A673 (cell line): ENCODE measurements at regions of chr3 and their contacts with region 1.

Region 1: DNA sequence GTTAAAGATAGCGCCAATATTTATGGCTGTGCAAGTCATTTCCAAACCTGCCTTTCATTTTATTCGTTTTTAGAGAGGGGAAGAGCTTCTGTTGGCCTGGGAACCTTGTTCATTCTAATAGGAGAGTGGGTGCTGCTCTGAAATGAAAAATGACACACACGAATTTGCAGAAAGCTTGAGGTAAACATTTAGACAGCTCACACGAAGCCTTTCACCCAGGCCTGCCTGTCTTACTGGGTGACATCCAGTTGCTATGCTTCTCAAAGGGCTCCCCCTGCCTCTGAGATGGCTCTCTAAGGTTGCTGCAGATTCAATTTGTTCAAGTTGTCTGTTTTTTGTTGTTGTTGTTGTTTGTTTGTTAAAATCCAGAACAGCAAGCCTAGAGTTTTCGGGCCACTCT is 18.2 kb downstream of the PEX5L start:
- DNase-seq: no peak
- H3K4me3 ChIP-seq: no peak overlapping the region
- H3K27ac ChIP-seq: no peak overlapping the region
- H3K4me1 ChIP-seq: no peaks in the 10 kb centered on the region
- H3K27me3 ChIP-seq: peaks cover 18% of the 10 kb centered on the region
- CTCF ChIP-seq: no peak

Region 2: GRCh38 chr3:178415384-178415783 is 1603.2 kb before region 1 on chr3:
- CTCF ChIA-PET with region 1: no interaction called
- POLR2A ChIA-PET with region 1: no interaction called
- intact Hi-C with region 1: no loop called
- DNase-seq: no peak
- H3K4me3 ChIP-seq: no peak overlapping the region
- H3K27ac ChIP-seq: no peak overlapping the region
- H3K4me1 ChIP-seq: no peaks in the 10 kb centered on the region
- H3K27me3 ChIP-seq: no peaks in the 10 kb centered on the region
- CTCF ChIP-seq: no peak

Region 3: DNA sequence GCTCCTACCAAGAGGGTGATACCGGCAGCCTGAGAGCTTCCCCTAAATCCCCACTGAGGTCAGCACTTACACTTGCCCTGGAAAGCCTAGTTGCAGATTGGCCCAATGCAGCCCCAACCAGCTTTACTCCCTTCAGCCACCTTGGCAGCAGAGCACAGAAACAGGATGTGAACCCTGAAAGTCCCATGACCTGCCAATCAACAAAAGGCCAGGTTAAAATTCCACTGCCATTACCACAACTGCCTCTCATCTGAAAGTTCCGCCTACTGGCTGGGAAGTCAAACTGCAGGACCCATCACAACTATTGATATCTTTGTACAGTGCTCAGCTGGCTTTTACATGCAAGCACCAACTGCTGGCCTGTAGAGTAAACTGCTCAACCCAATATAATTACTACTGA is 1103.2 kb before region 1 on chr3:
- CTCF ChIA-PET with region 1: no interaction called
- POLR2A ChIA-PET with region 1: no interaction called
- intact Hi-C with region 1: loop called (anchors 5 kb)
- DNase-seq: no peak
- H3K4me3 ChIP-seq: no peak overlapping the region
- H3K27ac ChIP-seq: no peak overlapping the region
- H3K4me1 ChIP-seq: no peaks in the 10 kb centered on the region
- H3K27me3 ChIP-seq: no peaks in the 10 kb centered on the region
- CTCF ChIP-seq: no peak

Region 4: DNA sequence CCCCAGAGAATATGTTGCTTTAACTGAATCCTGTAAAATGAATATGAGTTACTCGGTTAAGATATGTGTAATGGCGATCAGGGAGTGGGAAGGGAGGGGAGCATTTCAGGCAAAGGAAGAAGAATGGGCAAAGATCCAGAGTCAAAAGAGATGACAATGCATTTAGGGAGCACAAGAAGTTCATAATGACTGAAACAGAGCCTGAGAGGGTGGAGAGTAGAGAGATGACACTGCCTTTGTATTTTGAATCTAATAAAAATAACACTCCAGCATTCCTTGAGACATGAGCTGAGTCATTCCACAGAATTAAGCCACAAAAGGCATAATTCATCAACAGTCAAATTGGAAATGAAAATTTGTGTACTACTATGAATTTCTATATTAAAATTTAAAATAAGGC is 123.5 kb after region 1 on chr3:
- CTCF ChIA-PET with region 1: no interaction called
- POLR2A ChIA-PET with region 1: no interaction called
- intact Hi-C with region 1: no loop called
- DNase-seq: no peak
- H3K4me3 ChIP-seq: no peak overlapping the region
- H3K27ac ChIP-seq: no peak overlapping the region
- H3K4me1 ChIP-seq: no peaks in the 10 kb centered on the region
- H3K27me3 ChIP-seq: no peaks in the 10 kb centered on the region
- CTCF ChIP-seq: no peak